ENCODE measurements at regions of chr12 and their contacts with region 1.

Region 1: DNA sequence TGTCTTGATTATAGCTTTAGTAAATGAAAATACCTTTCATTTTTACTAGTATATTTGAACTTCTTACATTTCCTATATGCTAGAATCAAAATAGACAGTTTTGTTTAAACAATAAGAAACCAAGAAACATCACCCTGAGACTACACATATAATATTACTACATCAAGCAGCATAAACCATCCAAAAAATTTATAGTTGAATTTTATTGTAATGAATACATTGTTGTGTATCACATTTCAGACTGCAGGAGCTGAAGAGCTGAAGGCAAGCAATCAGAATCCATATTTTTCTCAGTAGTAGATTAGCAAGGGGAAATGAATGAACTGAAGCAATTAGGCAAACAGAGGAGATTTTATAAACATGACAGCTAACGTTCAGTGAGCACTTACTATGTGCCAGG is 379.2 kb downstream of the BTG1 start:
- DNase-seq: no peak
- H3K4me3 ChIP-seq: no peak overlapping the region
- H3K4me3 Mint-ChIP-seq: no peak overlapping the region
- H3K27ac ChIP-seq: no peak overlapping the region
- H3K27ac Mint-ChIP-seq: no peak overlapping the region
- H3K4me1 ChIP-seq: no peaks in the 10 kb centered on the region
- H3K4me1 Mint-ChIP-seq: no peaks in the 10 kb centered on the region
- H3K27me3 ChIP-seq: no peaks in the 10 kb centered on the region
- H3K27me3 Mint-ChIP-seq: peaks cover 0 to 1% of the 10 kb centered on the region in 2 donors

Region 2: GRCh38 chr12:91778938-91779400 is 12.5 kb after region 1 on chr12:
- CTCF ChIA-PET with region 1: no interaction called
- POLR2A ChIA-PET with region 1: interaction called, 10 read pairs
- intact Hi-C with region 1: no loop called
- DNase-seq: peak; percentile 23 to 71 (median 32)
- H3K4me3 ChIP-seq: peak overlapping the region; percentile 7 to 14
- H3K4me3 Mint-ChIP-seq: peak overlapping the region; percentile 72 to 88 (median 82)
- H3K27ac ChIP-seq: peak overlapping the region; percentile 49
- H3K27ac Mint-ChIP-seq: peak overlapping the region; percentile 70 to 95 (median 90)
- H3K4me1 ChIP-seq: peaks cover 35% of the 10 kb centered on the region
- H3K4me1 Mint-ChIP-seq: peaks cover 24 to 31% (median 27%) of the 10 kb centered on the region in 4 donors
- H3K27me3 ChIP-seq: no peaks in the 10 kb centered on the region
- H3K27me3 Mint-ChIP-seq: no peaks in the 10 kb centered on the region

Region 3: DNA sequence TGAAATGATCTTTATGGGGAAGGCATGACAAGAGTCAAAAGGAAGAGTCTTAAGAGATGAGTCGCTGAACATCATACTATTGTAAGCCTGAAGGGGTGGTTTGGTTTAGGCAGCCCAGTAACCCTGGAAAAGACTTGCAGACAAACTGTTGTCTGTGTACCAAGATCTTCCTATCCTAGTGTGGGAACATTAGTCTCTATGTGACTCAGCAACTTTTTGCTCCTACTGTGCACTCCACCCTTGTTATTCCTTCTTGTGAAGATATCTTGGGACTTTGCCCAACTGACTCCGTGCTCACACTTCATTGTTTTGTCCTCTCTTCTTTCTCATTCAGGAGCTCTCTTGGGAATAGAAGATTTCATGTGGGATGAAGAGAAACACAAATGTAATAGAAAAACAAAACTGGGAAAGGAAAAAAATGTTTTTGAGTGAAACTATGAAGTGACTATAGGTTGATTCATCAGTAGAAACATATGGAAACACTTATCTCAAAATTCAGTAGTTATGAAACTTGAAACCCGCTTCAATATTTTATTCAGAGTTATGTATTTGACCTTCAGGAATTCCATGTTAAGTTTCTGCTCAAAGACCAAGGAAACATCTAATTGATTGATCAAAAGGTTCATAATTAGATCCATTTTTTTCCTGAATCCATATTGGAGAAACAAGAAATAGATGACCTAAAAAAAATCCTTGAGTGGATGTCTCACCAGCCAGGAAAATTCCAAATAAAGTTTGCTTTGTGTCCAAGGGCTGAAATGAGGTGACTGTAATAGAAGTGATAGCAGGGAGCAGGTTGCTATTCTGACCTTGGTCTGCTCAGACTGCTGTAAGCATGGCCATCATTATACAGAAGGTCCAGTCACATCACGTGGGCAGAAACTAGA is 312.0 kb after region 1 on chr12:
- CTCF ChIA-PET with region 1: no interaction called
- POLR2A ChIA-PET with region 1: no interaction called
- intact Hi-C with region 1: no loop called
- DNase-seq: no peak
- H3K4me3 ChIP-seq: no peak overlapping the region
- H3K4me3 Mint-ChIP-seq: peak overlapping the region in 2 of 8 donors; percentile 7 to 20
- H3K27ac ChIP-seq: no peak overlapping the region
- H3K27ac Mint-ChIP-seq: peak overlapping the region in 4 of 7 donors; percentile 7 to 69 (median 56)
- H3K4me1 ChIP-seq: peaks cover 32% of the 10 kb centered on the region
- H3K4me1 Mint-ChIP-seq: peaks cover 36 to 73% (median 56%) of the 10 kb centered on the region in 4 donors
- H3K27me3 ChIP-seq: no peaks in the 10 kb centered on the region
- H3K27me3 Mint-ChIP-seq: no peaks in the 10 kb centered on the region

Measured in CD4-positive, alpha-beta memory T cell (primary cell).